ENCODE measurements at regions of chr5 and their contacts with region 1.

Region 1: DNA sequence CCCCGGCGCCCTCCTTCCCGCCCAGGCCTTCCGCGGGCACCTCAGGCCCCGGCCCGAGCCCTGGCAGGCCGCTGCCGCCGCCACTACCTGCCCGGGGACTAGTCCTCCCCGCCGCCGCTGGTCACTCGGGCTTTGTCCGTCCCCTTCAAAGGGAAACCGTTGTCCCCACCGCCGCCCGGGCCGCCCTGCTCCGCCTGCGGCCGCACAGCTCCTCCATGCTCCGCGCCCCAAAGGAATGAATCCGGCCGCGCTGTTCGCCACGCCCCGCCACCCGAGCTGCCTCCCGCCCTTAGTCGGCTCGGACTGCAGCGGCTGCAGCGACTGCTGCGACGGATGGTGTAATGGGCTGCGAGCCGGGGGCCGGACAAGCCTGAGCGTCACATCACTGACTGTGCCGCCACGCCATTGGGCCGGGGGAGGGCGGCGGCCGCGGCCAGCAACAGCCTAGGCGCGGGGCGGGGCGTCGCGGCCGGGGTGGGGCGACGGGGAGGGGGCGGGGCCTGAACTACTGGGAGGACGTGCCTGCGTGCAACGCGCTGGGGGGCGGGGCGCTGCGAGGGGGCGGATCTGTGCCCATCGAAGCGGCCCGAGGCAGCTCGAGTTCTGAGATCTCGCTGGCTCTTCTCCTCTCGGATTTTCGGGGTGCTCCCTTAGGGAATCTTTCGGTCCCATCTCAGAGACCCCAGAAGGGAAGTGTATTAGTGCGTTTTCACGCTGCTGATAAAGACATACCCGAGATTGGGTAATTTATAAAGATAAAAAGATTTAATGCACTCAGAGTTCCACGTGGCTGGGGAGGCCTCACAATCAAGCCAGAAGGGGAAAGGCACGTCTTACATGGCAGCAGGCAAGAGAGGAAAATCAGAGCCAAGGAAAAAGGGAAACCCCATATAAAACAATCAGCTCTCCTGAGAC is at the start of gene FEM1C:
- DNase-seq: peak; percentile 92 to 99
- H3K4me3 ChIP-seq: peak within 1 kb of the TSS; percentile 75 to 90
- H3K27ac ChIP-seq: peak within 1 kb of the TSS; percentile 95 to 99
- H3K4me1 ChIP-seq: peaks cover 3 to 14% of the 10 kb centered on the region in 2 donors
- H3K27me3 ChIP-seq: no peaks in the 10 kb centered on the region
- CTCF ChIP-seq: no peak
- total RNA-seq, gene FEM1C: 11.1 TPM

Region 2: GRCh38 chr5:115180165-115180709 is 364.5 kb before region 1 on chr5:
- intact Hi-C with region 1: loop called (anchors 10 kb)
- DNase-seq: no peak
- H3K4me3 ChIP-seq: peak overlapping the region; percentile 66 to 80
- H3K27ac ChIP-seq: peak overlapping the region; percentile 63 to 68
- H3K4me1 ChIP-seq: no peaks in the 10 kb centered on the region
- H3K27me3 ChIP-seq: no peaks in the 10 kb centered on the region
- CTCF ChIP-seq: no peak

Region 3: GRCh38 chr5:115296124-115297022 is 248.3 kb before region 1 on chr5 and contains the start of gene CCDC112:
- intact Hi-C with region 1: loop called (anchors 5 kb)
- DNase-seq: peak; percentile 40 to 82
- H3K4me3 ChIP-seq: peak within 1 kb of the TSS; percentile 79 to 100
- H3K27ac ChIP-seq: no peak within 1 kb of the TSS
- H3K4me1 ChIP-seq: peaks cover 0 to 3% of the 10 kb centered on the region in 2 donors
- H3K27me3 ChIP-seq: no peaks in the 10 kb centered on the region
- CTCF ChIP-seq: no peak
- total RNA-seq, gene CCDC112: 10.4 TPM

Region 4: GRCh38 chr5:115487756-115488155 is 56.9 kb before region 1 on chr5:
- intact Hi-C with region 1: no loop called
- DNase-seq: no peak
- H3K4me3 ChIP-seq: no peak overlapping the region
- H3K27ac ChIP-seq: no peak overlapping the region
- H3K4me1 ChIP-seq: no peaks in the 10 kb centered on the region
- H3K27me3 ChIP-seq: no peaks in the 10 kb centered on the region
- CTCF ChIP-seq: no peak

Region 5: DNA sequence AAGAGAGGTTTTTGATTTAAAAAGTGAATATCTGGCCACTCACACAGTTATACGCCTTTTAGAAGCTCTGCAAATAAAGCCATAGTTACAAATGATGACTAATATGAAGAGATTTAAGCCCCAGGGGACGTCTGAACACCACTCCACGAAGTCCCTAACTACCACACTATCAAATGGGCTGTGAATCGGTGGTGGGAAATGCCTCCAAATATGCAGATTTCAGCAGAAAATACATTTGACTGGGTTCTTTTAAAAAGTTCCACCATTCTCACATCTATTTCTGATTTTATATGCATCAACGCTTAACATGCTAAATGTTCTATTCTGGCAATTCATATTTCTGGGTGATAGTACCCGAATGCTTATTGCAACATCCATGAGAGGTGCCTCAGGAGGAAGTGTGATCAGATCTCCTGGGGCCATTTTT is 35.1 kb after region 1 on chr5:
- intact Hi-C with region 1: loop called (anchors 5 kb)
- DNase-seq: no peak
- H3K4me3 ChIP-seq: no peak overlapping the region
- H3K27ac ChIP-seq: no peak overlapping the region
- H3K4me1 ChIP-seq: no peaks in the 10 kb centered on the region
- H3K27me3 ChIP-seq: no peaks in the 10 kb centered on the region
- CTCF ChIP-seq: no peak

Region 6: GRCh38 chr5:115634343-115635132 is 89.8 kb after region 1 on chr5:
- intact Hi-C with region 1: no loop called
- DNase-seq: peak; percentile 24 to 94
- H3K4me3 ChIP-seq: peak overlapping the region; percentile 52 to 59
- H3K27ac ChIP-seq: peak overlapping the region; percentile 40 to 83
- H3K4me1 ChIP-seq: no peaks in the 10 kb centered on the region
- H3K27me3 ChIP-seq: no peaks in the 10 kb centered on the region
- CTCF ChIP-seq: peak; percentile 84 to 89 (median 88)

Region 7: GRCh38 chr5:115718927-115719326 is 174.2 kb after region 1 on chr5:
- intact Hi-C with region 1: loop called (anchors 10 kb)
- DNase-seq: no peak
- H3K4me3 ChIP-seq: no peak overlapping the region
- H3K27ac ChIP-seq: peak overlapping the region; percentile 32 to 67
- H3K4me1 ChIP-seq: peaks cover 3 to 33% of the 10 kb centered on the region in 2 donors
- H3K27me3 ChIP-seq: no peaks in the 10 kb centered on the region
- CTCF ChIP-seq: no peak

Region 8: GRCh38 chr5:116084871-116085715 is 540.4 kb after region 1 on chr5 and contains the start of gene COMMD10:
- intact Hi-C with region 1: loop called (anchors 10 kb)
- DNase-seq: peak; percentile 21 to 84
- H3K4me3 ChIP-seq: peak within 1 kb of the TSS; percentile 97 to 98
- H3K27ac ChIP-seq: peak within 1 kb of the TSS; percentile 87 to 91
- H3K4me1 ChIP-seq: peaks cover 0 to 13% of the 10 kb centered on the region in 2 donors
- H3K27me3 ChIP-seq: no peaks in the 10 kb centered on the region
- CTCF ChIP-seq: no peak
- total RNA-seq, gene COMMD10: 25.0 TPM

Measured in ascending aorta (tissue), 2 donors.